ENCODE measurements at regions of chr7 and their contacts with region 1.

Region 1: GRCh38 chr7:135170274-135170997 is at the start of gene CYREN:
- DNase-seq: peak; percentile 96
- H3K4me3 Mint-ChIP-seq: peak within 1 kb of the TSS; percentile 96
- H3K27ac Mint-ChIP-seq: peak within 1 kb of the TSS; percentile 95
- H3K4me1 Mint-ChIP-seq: peaks cover 46% of the 10 kb centered on the region
- H3K27me3 Mint-ChIP-seq: no peaks in the 10 kb centered on the region
- total RNA-seq, gene CYREN: 52.8 and 55.1 TPM in 2 replicates

Region 2: GRCh38 chr7:133778472-133778871 is 1392.0 kb before region 1 on chr7:
- intact Hi-C with region 1: no loop called
- DNase-seq: no peak
- H3K4me3 Mint-ChIP-seq: no peak overlapping the region
- H3K27ac Mint-ChIP-seq: no peak overlapping the region
- H3K4me1 Mint-ChIP-seq: no peaks in the 10 kb centered on the region
- H3K27me3 Mint-ChIP-seq: no peaks in the 10 kb centered on the region

Region 3: GRCh38 chr7:134458806-134459698 is 711.4 kb before region 1 on chr7 and contains the start of gene AKR1B1:
- intact Hi-C with region 1: loop called (anchors 10 kb)
- DNase-seq: peak; percentile 97
- H3K4me3 Mint-ChIP-seq: peak within 1 kb of the TSS; percentile 90
- H3K27ac Mint-ChIP-seq: peak within 1 kb of the TSS; percentile 83
- H3K4me1 Mint-ChIP-seq: peaks cover 39% of the 10 kb centered on the region
- H3K27me3 Mint-ChIP-seq: no peaks in the 10 kb centered on the region
- total RNA-seq, gene AKR1B1: 107 TPM in 2 replicates

Region 4: DNA sequence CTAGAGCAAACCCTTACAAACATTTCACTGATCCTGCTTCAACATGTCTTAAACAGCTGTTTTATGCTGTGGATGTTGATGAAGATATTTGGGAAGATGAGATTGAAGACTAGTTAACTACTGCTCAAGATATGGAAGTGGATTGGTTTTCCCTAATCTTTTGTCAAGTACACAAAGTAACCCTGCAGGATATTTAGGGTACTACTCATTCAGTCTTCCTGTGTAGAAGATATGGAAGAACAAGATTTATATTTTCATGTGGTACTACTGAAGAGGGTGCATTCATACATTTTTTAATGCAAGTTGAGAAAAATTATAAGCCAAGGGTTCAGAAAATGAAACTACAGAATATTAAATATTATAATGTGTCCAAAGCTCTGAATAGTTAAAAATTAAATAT is 40.9 kb before region 1 on chr7:
- intact Hi-C with region 1: no loop called
- DNase-seq: no peak
- H3K4me3 Mint-ChIP-seq: no peak overlapping the region
- H3K27ac Mint-ChIP-seq: no peak overlapping the region
- H3K4me1 Mint-ChIP-seq: no peaks in the 10 kb centered on the region
- H3K27me3 Mint-ChIP-seq: peaks cover 1% of the 10 kb centered on the region

Region 5: DNA sequence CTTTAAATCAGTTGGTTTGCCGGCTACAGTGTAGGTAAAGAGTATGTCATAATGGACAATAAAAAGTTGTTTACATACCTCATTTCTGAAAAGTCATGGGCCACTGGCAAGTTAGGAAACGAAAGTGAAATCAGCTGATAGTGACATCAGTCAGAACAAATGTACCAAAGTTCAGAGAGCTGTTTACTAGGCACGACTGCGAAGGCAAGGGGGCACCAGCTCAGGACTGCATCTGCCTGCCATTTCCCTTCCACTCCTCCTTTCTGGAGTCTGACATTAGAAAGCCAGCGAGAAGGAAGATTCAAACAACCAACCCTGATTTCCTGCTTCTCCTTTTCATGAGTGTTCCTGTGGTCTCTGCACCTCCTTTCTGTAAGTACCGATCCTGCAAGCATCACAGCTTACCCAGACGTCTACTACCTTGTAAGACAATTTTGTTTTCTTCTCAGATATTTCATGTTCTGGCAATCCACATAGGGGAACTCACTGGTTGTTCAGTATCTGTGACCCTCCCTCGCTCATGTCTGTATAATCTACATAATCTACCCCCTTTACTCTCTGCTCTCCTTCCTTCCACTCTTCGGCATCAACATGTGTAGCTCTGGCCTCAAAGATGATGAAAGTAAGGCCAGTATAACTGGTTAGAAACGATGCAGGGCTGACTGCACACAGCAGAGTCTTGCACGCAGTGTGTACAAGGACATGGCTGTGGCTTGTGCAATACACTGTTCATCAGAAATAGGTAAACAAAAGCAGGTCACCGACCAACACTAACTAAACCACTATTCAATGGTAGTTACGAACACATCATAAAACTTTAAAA is 22.3 kb before region 1 on chr7 and contains the start of gene TMEM140:
- intact Hi-C with region 1: loop called (anchors 1 kb)
- DNase-seq: peak; percentile 92
- H3K4me3 Mint-ChIP-seq: peak within 1 kb of the TSS; percentile 91
- H3K27ac Mint-ChIP-seq: peak within 1 kb of the TSS; percentile 95
- H3K4me1 Mint-ChIP-seq: peaks cover 54% of the 10 kb centered on the region
- H3K27me3 Mint-ChIP-seq: no peaks in the 10 kb centered on the region
- total RNA-seq, gene TMEM140: 2.2 TPM in 2 replicates

Region 6: GRCh38 chr7:135200824-135201331 is 30.4 kb after region 1 on chr7:
- intact Hi-C with region 1: no loop called
- DNase-seq: no peak
- H3K4me3 Mint-ChIP-seq: no peak overlapping the region
- H3K27ac Mint-ChIP-seq: no peak overlapping the region
- H3K4me1 Mint-ChIP-seq: peaks cover 24% of the 10 kb centered on the region
- H3K27me3 Mint-ChIP-seq: no peaks in the 10 kb centered on the region

Region 7: GRCh38 chr7:135211179-135211945 is 40.9 kb after region 1 on chr7 and contains the start of gene WDR91:
- intact Hi-C with region 1: loop called (anchors 2 kb)
- DNase-seq: peak; percentile 96
- H3K4me3 Mint-ChIP-seq: peak within 1 kb of the TSS; percentile 95
- H3K27ac Mint-ChIP-seq: peak within 1 kb of the TSS; percentile 98
- H3K4me1 Mint-ChIP-seq: peaks cover 29% of the 10 kb centered on the region
- H3K27me3 Mint-ChIP-seq: no peaks in the 10 kb centered on the region
- total RNA-seq, gene WDR91: 25.8 and 26.6 TPM in 2 replicates

Region 8: DNA sequence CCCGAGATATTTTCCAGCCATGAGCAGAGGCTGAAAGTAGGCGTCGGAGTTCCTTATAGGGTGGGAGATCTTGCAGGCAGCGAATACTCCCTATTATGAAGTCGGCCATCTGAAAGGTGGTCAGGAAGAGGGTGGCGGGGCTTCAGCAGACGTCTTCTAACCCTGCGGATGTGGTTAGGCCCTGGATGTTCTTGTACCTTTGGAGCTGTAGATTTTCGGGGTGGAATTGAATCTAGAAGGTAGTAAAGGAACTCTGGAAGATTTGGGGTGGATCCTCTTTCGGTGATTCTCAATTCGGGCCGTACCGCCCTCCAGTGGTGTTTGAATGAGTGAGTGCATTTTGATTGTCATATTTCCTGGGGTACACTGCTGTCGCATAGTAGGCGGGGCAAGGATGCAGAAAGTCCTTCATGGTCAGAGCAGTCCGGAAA is 387.9 kb after region 1 on chr7:
- intact Hi-C with region 1: loop called (anchors 1 kb)
- DNase-seq: peak; percentile 89
- H3K4me3 Mint-ChIP-seq: no peak overlapping the region
- H3K27ac Mint-ChIP-seq: no peak overlapping the region
- H3K4me1 Mint-ChIP-seq: peaks cover 14% of the 10 kb centered on the region
- H3K27me3 Mint-ChIP-seq: peaks cover 2% of the 10 kb centered on the region

Measured in activated CD4-positive, alpha-beta T cell treated with anti-CD3 and anti-CD28 coated beads, Interleukin-2, amount 10 ng/mL, durations not matched to agents 24 days and 14 days (primary cell).